Head of caudate nucleus (tissue), 42 donors: ENCODE measurements at regions of chr17 and their contacts with region 1.

Region 1: DNA sequence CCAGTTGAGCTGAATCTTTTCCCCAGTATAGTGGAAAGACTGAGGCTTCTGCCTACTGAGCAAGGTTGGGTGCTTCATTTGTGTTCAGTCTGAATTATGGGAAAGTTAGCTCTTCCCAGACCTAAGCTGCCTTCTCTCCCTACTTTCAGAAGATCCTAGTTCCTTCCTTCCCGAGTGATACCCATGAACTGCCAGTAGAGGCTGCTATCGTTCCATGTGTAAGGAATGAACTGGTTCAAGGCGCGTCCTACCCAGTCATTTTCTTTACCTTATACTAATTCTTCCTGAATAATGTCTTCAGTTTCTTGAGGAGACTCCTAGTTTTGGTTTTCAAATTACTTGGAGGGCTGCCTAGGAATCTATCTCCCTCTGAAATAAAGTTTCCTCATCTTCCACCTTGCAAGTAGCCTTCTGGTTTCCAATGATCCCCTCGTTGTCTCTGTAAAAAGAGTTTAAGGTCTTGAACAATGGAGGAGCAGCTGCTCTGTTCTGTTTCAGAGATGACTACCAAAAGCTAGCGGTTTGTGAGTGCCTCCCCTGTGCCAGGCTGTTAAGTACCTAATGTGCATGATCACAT is 934 bp upstream of the AOC2 start:
- DNase-seq: peak in 25 of 42 donors; percentile 17 to 76 (median 50)

Region 2: GRCh38 chr17:42937712-42938596 is 94.5 kb after region 1 on chr17:
- intact Hi-C with region 1: loop called (anchors 10 kb)
- DNase-seq: peak in 40 of 42 donors; percentile 11 to 71 (median 46)

Region 3: GRCh38 chr17:42997984-42998938 is 154.8 kb after region 1 on chr17 and contains the start of gene RPL27:
- intact Hi-C with region 1: loop called (anchors 10 kb)
- DNase-seq: peak; percentile 95 to 100 (median 99)